ENCODE measurements at regions of chr12 and their contacts with region 1.

Region 1: GRCh38 chr12:51424662-51425438 is at the start of gene SLC4A8:
- DNase-seq: peak; percentile 96
- H3K4me3 ChIP-seq: peak within 1 kb of the TSS; percentile 76 to 84
- H3K27ac ChIP-seq: peak within 1 kb of the TSS in 1 of 2 experiments; percentile 90; a peak in 3 of 4 replicates
- H3K4me1 ChIP-seq: peaks cover 4 to 32% of the 10 kb centered on the region in 2 experiments; a peak in 2 of 4 replicates
- H3K27me3 ChIP-seq: no peaks in the 10 kb centered on the region
- CTCF ChIP-seq: peak; percentile 83
- EP300 ChIP-seq: no peak
- RAD21 ChIP-seq: peak; percentile 59
- polyA plus RNA-seq, gene SLC4A8: 3.6 and 5.2 TPM in 2 replicates

Region 2: DNA sequence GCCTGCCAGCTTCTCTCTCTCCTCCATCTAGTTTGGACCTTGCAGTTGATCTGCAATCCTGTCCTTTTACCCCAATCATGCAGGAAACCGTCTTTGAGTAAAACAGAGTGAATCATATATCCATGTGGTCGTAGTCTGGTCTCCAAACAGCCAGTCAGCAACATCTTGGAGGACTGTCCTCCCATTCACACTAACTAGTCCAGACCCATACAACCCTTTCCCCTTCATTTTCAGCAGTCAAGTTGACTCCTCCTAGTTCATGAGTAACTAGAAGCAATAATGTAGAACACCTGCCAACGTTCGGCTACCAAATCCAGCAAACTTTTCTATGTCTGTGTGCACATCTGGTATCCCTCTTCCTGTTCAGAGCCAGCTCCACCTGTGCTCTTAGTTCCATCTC is 90.1 kb before region 1 on chr12:
- CTCF ChIA-PET with region 1: no interaction called
- POLR2A ChIA-PET with region 1: no interaction called
- DNase-seq: no peak
- H3K4me3 ChIP-seq: no peak overlapping the region
- H3K27ac ChIP-seq: no peak overlapping the region
- H3K4me1 ChIP-seq: no peaks in the 10 kb centered on the region
- H3K27me3 ChIP-seq: no peaks in the 10 kb centered on the region
- CTCF ChIP-seq: no peak
- EP300 ChIP-seq: no peak
- RAD21 ChIP-seq: no peak

Region 3: DNA sequence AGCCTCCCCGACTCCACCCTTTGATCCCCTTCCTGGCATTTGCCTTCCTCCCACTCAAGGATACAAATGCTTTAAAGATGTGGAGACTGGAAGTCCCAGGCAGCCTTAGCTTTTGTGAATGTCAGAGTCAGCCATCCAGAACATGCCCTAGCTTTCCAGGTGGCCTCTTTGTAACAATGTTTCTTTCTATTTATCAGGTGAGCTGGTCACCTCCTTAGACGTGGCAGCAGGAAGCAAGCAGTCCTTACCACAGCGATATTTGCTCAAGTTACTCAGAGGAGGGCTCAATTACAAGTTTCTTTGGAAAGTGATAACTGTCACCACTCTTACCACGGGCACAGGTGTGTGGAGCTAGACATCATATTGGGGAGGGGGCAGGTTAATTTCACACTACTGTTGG is 38.5 kb before region 1 on chr12:
- CTCF ChIA-PET with region 1: interaction called, 10 read pairs
- POLR2A ChIA-PET with region 1: interaction called, 3 read pairs
- DNase-seq: no peak
- H3K4me3 ChIP-seq: no peak overlapping the region
- H3K27ac ChIP-seq: no peak overlapping the region; a peak in 1 of 4 replicates
- H3K4me1 ChIP-seq: peaks cover 0 to 51% of the 10 kb centered on the region in 2 experiments; a peak in 2 of 4 replicates
- H3K27me3 ChIP-seq: no peaks in the 10 kb centered on the region
- CTCF ChIP-seq: no peak
- EP300 ChIP-seq: no peak
- RAD21 ChIP-seq: no peak

Region 4: GRCh38 chr12:51409846-51410245 is 15.0 kb before region 1 on chr12:
- CTCF ChIA-PET with region 1: interaction called, 47 read pairs
- POLR2A ChIA-PET with region 1: interaction called, 3 read pairs
- DNase-seq: peak; percentile 73
- H3K4me3 ChIP-seq: no peak overlapping the region
- H3K27ac ChIP-seq: peak overlapping the region in 1 of 2 experiments; percentile 85; a peak in 2 of 4 replicates
- H3K4me1 ChIP-seq: peaks cover 0 to 39% of the 10 kb centered on the region in 2 experiments; a peak in 2 of 4 replicates
- H3K27me3 ChIP-seq: no peaks in the 10 kb centered on the region
- CTCF ChIP-seq: no peak
- EP300 ChIP-seq: peak in 1 of 2 experiments; percentile 99; a peak in 2 of 4 replicates
- RAD21 ChIP-seq: peak; percentile 51; the same call in 1 of the 2 replicates

Region 5: DNA sequence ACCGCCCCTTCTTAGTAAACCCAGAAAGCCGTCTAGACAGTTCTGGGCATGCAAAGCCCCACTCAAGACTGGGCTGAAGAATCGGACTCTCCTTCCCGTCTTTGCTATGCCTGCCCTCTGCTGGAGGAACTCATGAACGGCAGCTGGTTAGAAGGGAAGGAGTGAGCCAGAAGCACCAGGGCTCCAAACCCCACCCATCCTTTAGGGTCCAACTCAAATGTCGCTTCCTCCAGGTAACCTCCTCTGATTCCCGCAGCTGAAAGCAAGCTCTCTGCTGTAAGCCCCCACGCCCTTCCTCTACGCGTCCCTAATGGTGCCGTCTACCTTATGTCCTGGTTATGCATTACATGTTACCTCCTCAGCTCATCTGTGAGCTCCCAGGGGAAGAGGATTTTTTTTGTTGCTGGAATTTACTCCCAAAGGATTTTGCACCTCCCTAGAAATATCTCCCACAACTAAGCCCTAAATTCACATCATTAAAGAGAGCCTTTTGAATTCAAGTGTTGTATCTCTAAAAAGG is 107.2 kb after region 1 on chr12:
- CTCF ChIA-PET with region 1: interaction called, 418 read pairs
- POLR2A ChIA-PET with region 1: no interaction called
- DNase-seq: peak; percentile 80
- H3K4me3 ChIP-seq: no peak overlapping the region
- H3K27ac ChIP-seq: no peak overlapping the region
- H3K4me1 ChIP-seq: peaks cover 6 to 27% of the 10 kb centered on the region in 2 experiments; a peak in 2 of 4 replicates
- H3K27me3 ChIP-seq: no peaks in the 10 kb centered on the region
- CTCF ChIP-seq: peak; percentile 83
- EP300 ChIP-seq: no peak
- RAD21 ChIP-seq: peak; percentile 95

Region 6: GRCh38 chr12:51590347-51591019 is 165.6 kb after region 1 on chr12:
- CTCF ChIA-PET with region 1: interaction called, 11 read pairs
- POLR2A ChIA-PET with region 1: no interaction called
- DNase-seq: peak; percentile 96
- H3K4me3 ChIP-seq: peak overlapping the region; percentile 63 to 72
- H3K27ac ChIP-seq: peak overlapping the region; percentile 31 to 50; a peak in 2 of 4 replicates
- H3K4me1 ChIP-seq: peaks cover 0 to 16% of the 10 kb centered on the region in 2 experiments; a peak in 2 of 4 replicates
- H3K27me3 ChIP-seq: no peaks in the 10 kb centered on the region
- CTCF ChIP-seq: peak; percentile 44
- EP300 ChIP-seq: no peak
- RAD21 ChIP-seq: peak; percentile 41; the same call in 1 of the 2 replicates

Region 7: GRCh38 chr12:51788876-51789275 is 364.0 kb after region 1 on chr12:
- CTCF ChIA-PET with region 1: no interaction called
- POLR2A ChIA-PET with region 1: no interaction called
- DNase-seq: no peak
- H3K4me3 ChIP-seq: no peak overlapping the region
- H3K27ac ChIP-seq: peak overlapping the region in 1 of 2 experiments; percentile 25; a peak in 1 of 4 replicates
- H3K4me1 ChIP-seq: peaks cover 0 to 5% of the 10 kb centered on the region in 2 experiments; a peak in 2 of 4 replicates
- H3K27me3 ChIP-seq: no peaks in the 10 kb centered on the region
- CTCF ChIP-seq: no peak
- EP300 ChIP-seq: no peak
- RAD21 ChIP-seq: no peak

Region 8: GRCh38 chr12:51823875-51824565 is 399.2 kb after region 1 on chr12:
- CTCF ChIA-PET with region 1: interaction called, 22 read pairs
- POLR2A ChIA-PET with region 1: no interaction called
- DNase-seq: peak; percentile 66
- H3K4me3 ChIP-seq: no peak overlapping the region
- H3K27ac ChIP-seq: no peak overlapping the region
- H3K4me1 ChIP-seq: peaks cover 8 to 23% of the 10 kb centered on the region in 2 experiments; a peak in 2 of 4 replicates
- H3K27me3 ChIP-seq: no peaks in the 10 kb centered on the region
- CTCF ChIP-seq: peak; percentile 70
- EP300 ChIP-seq: no peak
- RAD21 ChIP-seq: peak; percentile 78